ENCODE measurements at regions of chr5 and their contacts with region 1.

Region 1: GRCh38 chr5:123157791-123158581 is 68.9 kb downstream of the PRDM6 start:
- DNase-seq: no peak
- ATAC-seq: no peak
- H3K4me3 ChIP-seq: no peak overlapping the region
- H3K27ac ChIP-seq: no peak overlapping the region
- H3K4me1 ChIP-seq: peaks cover 0 to 5% (median 0%) of the 10 kb centered on the region in 9 donors
- H3K27me3 ChIP-seq: no peaks in the 10 kb centered on the region
- CTCF ChIP-seq: peak in 1 of 9 donors; percentile 17

Region 2: DNA sequence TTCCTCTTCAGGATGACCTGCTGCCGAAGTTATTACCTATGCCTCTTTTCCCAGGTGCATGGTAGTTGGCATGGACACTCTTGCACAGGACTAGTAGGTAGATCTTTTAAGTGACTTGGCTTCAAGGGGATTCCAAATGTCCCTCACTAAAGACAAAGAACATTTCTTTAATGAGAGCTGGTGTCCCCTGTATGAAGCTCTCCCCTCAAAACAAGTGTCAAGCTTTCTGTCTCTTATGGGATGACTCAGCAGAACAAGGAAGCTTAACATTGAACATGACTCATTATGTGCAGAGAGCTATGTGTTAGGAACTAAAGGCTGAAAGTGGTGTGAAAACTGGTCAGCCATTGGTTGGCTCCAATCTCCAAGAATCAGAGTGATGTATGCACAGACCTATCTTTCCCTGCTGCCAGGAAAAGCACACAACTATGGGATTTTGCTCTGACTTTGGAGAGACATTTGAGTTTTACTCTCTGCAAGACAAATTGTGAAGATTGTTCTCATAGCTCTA is 51.6 kb after region 1 on chr5:
- intact Hi-C with region 1: loop called in 1 of 10 experiments (anchors 1 kb)
- DNase-seq: no peak
- ATAC-seq: no peak
- H3K4me3 ChIP-seq: no peak overlapping the region
- H3K27ac ChIP-seq: no peak overlapping the region
- H3K4me1 ChIP-seq: peaks cover 0 to 6% (median 0%) of the 10 kb centered on the region in 9 donors
- H3K27me3 ChIP-seq: no peaks in the 10 kb centered on the region
- CTCF ChIP-seq: no peak

Measured in heart right ventricle (tissue), 16 donors.